ENCODE measurements at regions of chr1 and their contacts with region 1.

Region 1: GRCh38 chr1:172398970-172399755 is 21.3 kb upstream of the C1orf105 start:
- DNase-seq: peak; percentile 74
- ATAC-seq: peak; percentile 50
- H3K4me3 ChIP-seq: peak overlapping the region in 3 of 5 experiments; percentile 33 to 41 (median 36)
- H3K4me3 Mint-ChIP-seq: peak overlapping the region; percentile 78
- H3K27ac ChIP-seq: peak overlapping the region; percentile 47 to 71
- H3K27ac Mint-ChIP-seq: peak overlapping the region; percentile 94
- H3K4me1 ChIP-seq: peaks cover 43 to 48% of the 10 kb centered on the region in 2 donors
- H3K4me1 Mint-ChIP-seq: peaks cover 56% of the 10 kb centered on the region
- H3K27me3 ChIP-seq: no peaks in the 10 kb centered on the region
- H3K27me3 Mint-ChIP-seq: no peaks in the 10 kb centered on the region
- CTCF ChIP-seq: peak; percentile 92

Region 2: DNA sequence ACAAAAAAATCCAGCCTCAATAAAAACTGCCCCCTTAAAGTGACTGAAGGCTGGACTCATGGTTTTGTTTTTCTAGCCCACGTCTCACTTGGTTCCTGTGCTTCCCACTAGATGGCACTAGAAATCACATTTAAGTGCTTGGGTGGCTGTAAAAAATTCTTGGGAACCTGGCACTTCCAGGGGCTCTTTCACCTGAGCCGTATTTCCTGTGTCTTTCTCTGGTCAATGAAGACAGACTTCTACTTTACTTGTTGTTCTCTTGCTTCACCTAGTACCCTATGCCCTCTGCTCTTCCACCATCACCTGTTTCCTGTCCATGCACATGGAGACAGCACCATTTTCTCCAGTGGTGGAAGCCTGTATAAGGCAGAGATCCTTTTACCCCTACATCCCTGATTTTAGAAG is 597.7 kb before region 1 on chr1:
- CTCF ChIA-PET with region 1: interaction called, 11 read pairs
- POLR2A ChIA-PET with region 1: no interaction called
- intact Hi-C with region 1: loop called (anchors 1 kb)
- DNase-seq: peak; percentile 38
- ATAC-seq: peak; percentile 51
- H3K4me3 ChIP-seq: no peak overlapping the region
- H3K4me3 Mint-ChIP-seq: no peak overlapping the region
- H3K27ac ChIP-seq: no peak overlapping the region
- H3K27ac Mint-ChIP-seq: no peak overlapping the region
- H3K4me1 ChIP-seq: peaks cover 7 to 11% of the 10 kb centered on the region in 2 donors
- H3K4me1 Mint-ChIP-seq: peaks cover 15% of the 10 kb centered on the region
- H3K27me3 ChIP-seq: no peaks in the 10 kb centered on the region
- H3K27me3 Mint-ChIP-seq: no peaks in the 10 kb centered on the region
- CTCF ChIP-seq: peak; percentile 82

Region 3: DNA sequence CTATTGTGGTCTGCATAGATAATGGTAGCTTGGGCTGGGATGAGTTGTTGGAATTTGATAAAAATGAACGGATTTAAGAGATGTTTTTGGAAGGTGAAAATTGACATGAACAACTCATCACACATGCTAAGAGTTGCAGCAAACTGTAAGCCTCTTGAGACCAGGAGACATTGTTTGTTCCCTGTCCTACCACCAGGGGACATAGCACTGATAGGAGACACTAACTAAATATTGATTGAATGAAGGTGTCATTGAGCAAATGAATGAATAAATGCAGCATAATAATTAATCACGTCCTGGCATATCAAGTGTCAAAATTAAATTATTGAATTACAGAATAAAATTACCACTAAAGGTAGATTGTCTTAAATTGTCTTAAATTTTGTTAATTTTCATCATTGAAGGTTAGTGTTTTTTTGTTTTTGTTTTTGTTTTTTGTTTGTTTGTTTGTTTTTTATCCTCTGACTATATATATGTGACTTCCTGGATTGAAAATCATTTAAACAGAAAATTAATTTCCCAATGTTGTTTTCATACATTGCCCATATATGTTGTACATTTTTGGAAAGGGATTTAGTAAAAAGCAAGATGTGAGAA is 264.0 kb before region 1 on chr1:
- CTCF ChIA-PET with region 1: interaction called, 64 read pairs
- POLR2A ChIA-PET with region 1: no interaction called
- intact Hi-C with region 1: loop called (anchors 1 kb)
- DNase-seq: peak; percentile 57
- ATAC-seq: no peak
- H3K4me3 ChIP-seq: no peak overlapping the region
- H3K4me3 Mint-ChIP-seq: no peak overlapping the region
- H3K27ac ChIP-seq: no peak overlapping the region
- H3K27ac Mint-ChIP-seq: no peak overlapping the region
- H3K4me1 ChIP-seq: no peaks in the 10 kb centered on the region
- H3K4me1 Mint-ChIP-seq: peaks cover 12% of the 10 kb centered on the region
- H3K27me3 ChIP-seq: no peaks in the 10 kb centered on the region
- H3K27me3 Mint-ChIP-seq: no peaks in the 10 kb centered on the region
- CTCF ChIP-seq: peak; percentile 82

Region 4: DNA sequence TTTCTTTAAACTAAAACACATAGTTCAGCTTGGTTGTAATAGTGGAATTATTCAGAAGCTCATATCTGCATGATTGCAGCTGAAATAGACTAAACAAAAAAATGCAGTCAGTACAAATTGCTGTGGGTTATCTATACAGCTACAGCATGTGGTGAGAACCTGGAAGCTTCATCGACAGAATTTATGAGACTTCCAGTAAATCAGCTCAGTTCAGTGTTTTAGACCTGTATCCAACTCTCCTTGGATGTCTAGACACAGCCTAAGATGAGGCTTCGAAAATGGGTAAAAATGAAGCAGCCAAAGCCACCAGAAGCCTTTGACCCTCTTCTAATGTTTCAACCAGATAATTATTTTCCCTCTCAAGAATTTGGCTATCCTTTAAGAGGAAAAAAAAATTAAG is 105.7 kb before region 1 on chr1:
- CTCF ChIA-PET with region 1: no interaction called
- POLR2A ChIA-PET with region 1: no interaction called
- intact Hi-C with region 1: no loop called
- DNase-seq: no peak
- ATAC-seq: no peak
- H3K4me3 ChIP-seq: no peak overlapping the region
- H3K4me3 Mint-ChIP-seq: no peak overlapping the region
- H3K27ac ChIP-seq: no peak overlapping the region
- H3K27ac Mint-ChIP-seq: no peak overlapping the region
- H3K4me1 ChIP-seq: no peaks in the 10 kb centered on the region
- H3K4me1 Mint-ChIP-seq: no peaks in the 10 kb centered on the region
- H3K27me3 ChIP-seq: no peaks in the 10 kb centered on the region
- H3K27me3 Mint-ChIP-seq: no peaks in the 10 kb centered on the region
- CTCF ChIP-seq: no peak

Region 5: DNA sequence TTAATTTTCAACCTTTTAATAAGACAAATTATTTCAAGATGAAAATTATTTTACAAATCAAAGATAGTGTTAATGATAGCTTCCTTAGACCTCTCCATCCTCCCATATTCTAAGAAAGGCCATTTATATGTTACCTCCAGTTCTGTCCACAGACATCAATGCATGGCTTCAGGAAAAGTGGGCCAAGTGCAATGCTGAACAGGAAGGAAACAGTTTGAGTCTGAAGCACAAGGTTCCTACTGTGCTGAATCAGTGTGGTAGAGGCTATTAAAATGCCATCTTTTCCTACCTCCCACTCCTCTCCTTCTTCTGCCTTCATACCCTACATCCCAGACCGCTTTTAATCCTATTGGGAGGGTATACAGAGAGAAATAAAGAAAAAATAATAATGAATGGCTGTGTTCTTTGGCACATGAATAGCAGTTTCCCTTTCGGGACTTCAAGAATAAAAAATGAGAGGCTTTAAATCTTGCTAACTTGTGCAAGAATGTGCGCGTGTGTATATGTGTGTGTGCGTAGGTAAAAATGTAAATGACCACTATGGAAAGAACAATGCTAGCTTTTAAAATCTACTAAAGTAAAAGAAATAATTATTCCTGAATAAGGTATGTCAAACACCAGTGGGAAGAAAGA is 41.3 kb before region 1 on chr1:
- CTCF ChIA-PET with region 1: interaction called, 29 read pairs
- POLR2A ChIA-PET with region 1: interaction called, 26 read pairs
- intact Hi-C with region 1: loop called (anchors 2 kb)
- DNase-seq: no peak
- ATAC-seq: peak; percentile 20
- H3K4me3 ChIP-seq: peak overlapping the region in 1 of 5 experiments; percentile 17
- H3K4me3 Mint-ChIP-seq: peak overlapping the region; percentile 36
- H3K27ac ChIP-seq: peak overlapping the region; percentile 67 to 81
- H3K27ac Mint-ChIP-seq: peak overlapping the region; percentile 83
- H3K4me1 ChIP-seq: peaks cover 43 to 54% of the 10 kb centered on the region in 2 donors
- H3K4me1 Mint-ChIP-seq: peaks cover 56% of the 10 kb centered on the region
- H3K27me3 ChIP-seq: no peaks in the 10 kb centered on the region
- H3K27me3 Mint-ChIP-seq: no peaks in the 10 kb centered on the region
- CTCF ChIP-seq: no peak

Region 6: GRCh38 chr1:172414331-172414730 is 15.2 kb after region 1 on chr1:
- CTCF ChIA-PET with region 1: interaction called, 12 read pairs
- POLR2A ChIA-PET with region 1: no interaction called
- intact Hi-C with region 1: no loop called
- DNase-seq: no peak
- ATAC-seq: no peak
- H3K4me3 ChIP-seq: no peak overlapping the region
- H3K4me3 Mint-ChIP-seq: no peak overlapping the region
- H3K27ac ChIP-seq: no peak overlapping the region
- H3K27ac Mint-ChIP-seq: no peak overlapping the region
- H3K4me1 ChIP-seq: no peaks in the 10 kb centered on the region
- H3K4me1 Mint-ChIP-seq: no peaks in the 10 kb centered on the region
- H3K27me3 ChIP-seq: no peaks in the 10 kb centered on the region
- H3K27me3 Mint-ChIP-seq: no peaks in the 10 kb centered on the region
- CTCF ChIP-seq: no peak

Region 7: GRCh38 chr1:172507741-172508140 is 108.6 kb after region 1 on chr1:
- CTCF ChIA-PET with region 1: no interaction called
- POLR2A ChIA-PET with region 1: no interaction called
- intact Hi-C with region 1: no loop called
- DNase-seq: no peak
- ATAC-seq: no peak
- H3K4me3 ChIP-seq: no peak overlapping the region
- H3K4me3 Mint-ChIP-seq: no peak overlapping the region
- H3K27ac ChIP-seq: no peak overlapping the region
- H3K27ac Mint-ChIP-seq: no peak overlapping the region
- H3K4me1 ChIP-seq: no peaks in the 10 kb centered on the region
- H3K4me1 Mint-ChIP-seq: no peaks in the 10 kb centered on the region
- H3K27me3 ChIP-seq: peaks cover 0 to 2% (median 0%) of the 10 kb centered on the region in 4 experiments
- H3K27me3 Mint-ChIP-seq: peaks cover 18% of the 10 kb centered on the region
- CTCF ChIP-seq: no peak

Region 8: GRCh38 chr1:172532700-172533509 is 133.7 kb after region 1 on chr1 and contains the start of gene SUCO:
- CTCF ChIA-PET with region 1: no interaction called
- POLR2A ChIA-PET with region 1: no interaction called
- intact Hi-C with region 1: loop called (anchors 2 kb)
- DNase-seq: peak; percentile 100
- ATAC-seq: peak; percentile 80
- H3K4me3 ChIP-seq: peak within 1 kb of the TSS; percentile 64 to 98 (median 96)
- H3K4me3 Mint-ChIP-seq: peak within 1 kb of the TSS; percentile 100
- H3K27ac ChIP-seq: peak within 1 kb of the TSS; percentile 99
- H3K27ac Mint-ChIP-seq: peak within 1 kb of the TSS; percentile 100
- H3K4me1 ChIP-seq: peaks cover 22 to 37% of the 10 kb centered on the region in 2 donors
- H3K4me1 Mint-ChIP-seq: peaks cover 45% of the 10 kb centered on the region
- H3K27me3 ChIP-seq: no peaks in the 10 kb centered on the region
- H3K27me3 Mint-ChIP-seq: peaks cover 9% of the 10 kb centered on the region
- CTCF ChIP-seq: peak; percentile 13
- total RNA-seq, gene SUCO: 59.7 and 59.9 TPM in 2 replicates

Measured in B cell (primary cell).